Activated naive CD4-positive, alpha-beta T cell treated with anti-CD3 and anti-CD28 coated beads for 36 hours (primary cell): ENCODE measurements at regions of chr9 and their contacts with region 1.

Region 1: GRCh38 chr9:34546834-34547827 is 24.3 kb upstream of the ENHO start:
- DNase-seq: peak; percentile 77
- H3K4me3 Mint-ChIP-seq: no peak overlapping the region
- H3K27ac Mint-ChIP-seq: no peak overlapping the region
- H3K4me1 Mint-ChIP-seq: no peaks in the 10 kb centered on the region
- H3K27me3 Mint-ChIP-seq: peaks cover 10% of the 10 kb centered on the region

Region 2: DNA sequence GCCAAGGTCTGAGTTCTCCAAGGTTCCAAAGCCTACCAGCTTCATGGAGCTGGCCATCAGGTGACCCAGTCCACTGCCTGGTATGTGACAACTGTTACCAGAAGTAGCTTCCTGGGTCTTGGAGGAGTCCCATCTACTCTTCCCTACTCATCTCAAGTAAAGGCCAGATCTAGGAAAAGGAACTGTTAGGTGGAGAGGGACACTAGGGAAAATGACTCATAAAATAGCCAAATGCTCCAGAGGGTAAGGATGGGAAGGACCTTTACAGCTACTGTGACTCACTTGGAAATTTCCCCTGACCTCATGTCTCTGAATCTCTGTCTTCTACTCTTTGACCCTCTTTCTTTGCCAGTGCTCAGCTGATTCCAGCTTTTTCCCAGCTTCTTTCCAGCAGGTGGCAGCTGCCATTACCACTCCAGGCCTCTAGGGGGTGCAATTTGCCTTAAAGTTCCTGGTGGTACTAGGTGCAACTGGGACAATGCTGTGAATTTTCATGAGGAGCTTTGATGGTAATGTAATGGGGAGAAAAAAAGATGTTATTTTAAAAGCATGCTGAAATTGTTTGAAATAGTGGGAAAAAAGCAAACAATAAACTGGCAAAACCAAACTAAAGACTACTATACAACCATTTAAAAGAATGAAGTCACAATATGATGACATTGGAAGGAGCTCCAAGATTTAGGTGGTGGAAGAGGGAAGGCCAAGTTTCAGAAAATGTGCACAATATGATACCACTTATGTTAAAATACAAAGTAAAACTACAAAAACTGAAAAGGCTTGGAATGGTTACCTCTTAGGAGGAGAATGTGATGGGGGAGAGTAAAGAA is 143.4 kb before region 1 on chr9:
- CTCF ChIA-PET with region 1: interaction called, 5 read pairs
- intact Hi-C with region 1: loop called (anchors 1 kb)
- DNase-seq: peak; percentile 79
- H3K4me3 Mint-ChIP-seq: no peak overlapping the region
- H3K27ac Mint-ChIP-seq: no peak overlapping the region
- H3K4me1 Mint-ChIP-seq: no peaks in the 10 kb centered on the region
- H3K27me3 Mint-ChIP-seq: no peaks in the 10 kb centered on the region

Region 3: GRCh38 chr9:34437006-34437925 is 109.9 kb before region 1 on chr9:
- CTCF ChIA-PET with region 1: interaction called, 3 read pairs
- intact Hi-C with region 1: loop called (anchors 1 kb)
- DNase-seq: peak; percentile 78
- H3K4me3 Mint-ChIP-seq: no peak overlapping the region
- H3K27ac Mint-ChIP-seq: peak overlapping the region; percentile 12
- H3K4me1 Mint-ChIP-seq: peaks cover 7% of the 10 kb centered on the region
- H3K27me3 Mint-ChIP-seq: no peaks in the 10 kb centered on the region

Region 4: GRCh38 chr9:34522971-34523797 is 23.9 kb before region 1 on chr9 and contains the start of gene ENHO:
- CTCF ChIA-PET with region 1: no interaction called
- intact Hi-C with region 1: loop called (anchors 2 kb)
- DNase-seq: peak; percentile 88
- H3K4me3 Mint-ChIP-seq: peak within 1 kb of the TSS; percentile 57
- H3K27ac Mint-ChIP-seq: no peak within 1 kb of the TSS
- H3K4me1 Mint-ChIP-seq: peaks cover 22% of the 10 kb centered on the region
- H3K27me3 Mint-ChIP-seq: peaks cover 11% of the 10 kb centered on the region
- total RNA-seq, gene ENHO: 0.19 to 0.27 TPM